ENCODE measurements at regions of chr6 and their contacts with region 1.

Region 1: DNA sequence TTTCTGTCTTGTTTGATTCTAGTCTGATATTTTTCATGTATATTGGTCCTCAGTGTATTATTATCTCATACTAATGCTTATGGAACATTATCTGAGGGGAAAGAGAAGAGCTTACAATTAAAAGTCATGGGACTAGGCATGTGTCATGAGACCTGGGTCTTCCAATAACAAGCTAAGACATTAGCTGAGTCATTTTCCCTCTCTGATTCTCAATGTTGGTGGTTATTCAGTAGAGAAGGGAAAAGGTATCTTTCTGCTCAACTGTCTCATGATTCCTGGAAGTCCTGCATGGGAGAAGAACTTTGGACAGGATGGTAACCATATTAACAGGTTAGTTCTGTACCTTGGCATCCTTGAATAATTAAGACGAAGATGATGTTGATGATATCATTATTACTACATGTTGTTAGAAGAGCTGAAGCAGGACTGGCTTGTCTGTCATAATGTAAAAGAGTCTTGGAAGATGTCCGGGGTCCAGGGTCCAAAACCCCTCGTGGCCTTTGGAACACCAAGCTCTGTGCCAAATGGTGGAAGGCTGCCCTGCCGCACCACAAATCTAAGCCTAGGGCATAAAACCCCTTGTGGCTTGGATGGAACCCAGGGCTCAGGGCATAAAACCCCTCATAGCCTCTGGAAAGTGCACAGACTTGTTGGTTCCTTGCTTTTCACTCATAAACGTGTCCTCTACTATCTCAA is 19.1 kb downstream of the TRIM38 start:
- DNase-seq: no peak
- ATAC-seq: no peak
- H3K4me3 ChIP-seq: no peak overlapping the region
- H3K27ac ChIP-seq: no peak overlapping the region
- H3K4me1 ChIP-seq: no peaks in the 10 kb centered on the region
- H3K27me3 ChIP-seq: no peaks in the 10 kb centered on the region
- CTCF ChIP-seq: no peak
- EP300 ChIP-seq: no peak
- POLR2A ChIP-seq: no peak
- RAD21 ChIP-seq: no peak

Region 2: DNA sequence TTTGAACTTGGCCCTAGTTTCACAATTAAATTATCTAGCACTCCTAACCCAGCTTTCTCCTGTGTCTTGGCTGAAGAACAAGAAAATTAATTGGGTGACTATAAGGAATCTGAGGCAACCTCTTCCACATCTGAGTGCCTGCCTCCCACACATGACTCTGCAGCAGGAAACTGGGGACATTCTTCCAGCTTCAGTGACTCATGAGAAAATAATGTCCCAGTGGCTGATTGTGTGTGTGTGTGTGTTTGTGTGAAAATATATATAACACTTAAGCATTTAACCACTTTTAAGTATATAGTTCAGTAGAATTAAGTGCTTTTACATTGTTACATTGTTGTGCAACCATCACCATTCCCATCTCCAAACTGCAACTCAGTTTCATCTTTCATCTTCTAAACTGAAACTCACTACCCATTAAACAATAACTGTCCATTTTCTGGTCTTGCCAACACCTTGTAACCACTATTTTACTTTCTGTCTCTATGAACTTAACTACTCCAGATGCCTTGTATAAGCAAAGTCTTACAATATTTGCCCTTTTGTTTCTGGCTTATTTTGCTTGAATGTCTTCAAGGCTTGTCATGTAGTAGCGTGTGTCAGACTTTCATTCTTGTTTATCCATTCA is 10.4 kb before region 1 on chr6:
- CTCF ChIA-PET with region 1: interaction called, 12 read pairs
- POLR2A ChIA-PET with region 1: interaction called, 4 read pairs
- RAD21 ChIA-PET with region 1: no interaction called
- SMC1A ChIA-PET with region 1: interaction called, 15 read pairs
- in situ Hi-C with region 1: no loop called
- intact Hi-C with region 1: no loop called
- DNase-seq: no peak
- ATAC-seq: peak; percentile 19
- H3K4me3 ChIP-seq: 0 out of 2 replicates have a peak overlapping the region, but pooled peaks have one; percentile 13
- H3K27ac ChIP-seq: no peak overlapping the region; the same call in 1 of the 2 replicates
- H3K4me1 ChIP-seq: peaks cover 23% of the 10 kb centered on the region
- H3K27me3 ChIP-seq: no peaks in the 10 kb centered on the region
- CTCF ChIP-seq: no peak
- EP300 ChIP-seq: no peak
- POLR2A ChIP-seq: no peak
- RAD21 ChIP-seq: no peak